ENCODE measurements at regions of chr3 and their contacts with region 1.

Region 1: DNA sequence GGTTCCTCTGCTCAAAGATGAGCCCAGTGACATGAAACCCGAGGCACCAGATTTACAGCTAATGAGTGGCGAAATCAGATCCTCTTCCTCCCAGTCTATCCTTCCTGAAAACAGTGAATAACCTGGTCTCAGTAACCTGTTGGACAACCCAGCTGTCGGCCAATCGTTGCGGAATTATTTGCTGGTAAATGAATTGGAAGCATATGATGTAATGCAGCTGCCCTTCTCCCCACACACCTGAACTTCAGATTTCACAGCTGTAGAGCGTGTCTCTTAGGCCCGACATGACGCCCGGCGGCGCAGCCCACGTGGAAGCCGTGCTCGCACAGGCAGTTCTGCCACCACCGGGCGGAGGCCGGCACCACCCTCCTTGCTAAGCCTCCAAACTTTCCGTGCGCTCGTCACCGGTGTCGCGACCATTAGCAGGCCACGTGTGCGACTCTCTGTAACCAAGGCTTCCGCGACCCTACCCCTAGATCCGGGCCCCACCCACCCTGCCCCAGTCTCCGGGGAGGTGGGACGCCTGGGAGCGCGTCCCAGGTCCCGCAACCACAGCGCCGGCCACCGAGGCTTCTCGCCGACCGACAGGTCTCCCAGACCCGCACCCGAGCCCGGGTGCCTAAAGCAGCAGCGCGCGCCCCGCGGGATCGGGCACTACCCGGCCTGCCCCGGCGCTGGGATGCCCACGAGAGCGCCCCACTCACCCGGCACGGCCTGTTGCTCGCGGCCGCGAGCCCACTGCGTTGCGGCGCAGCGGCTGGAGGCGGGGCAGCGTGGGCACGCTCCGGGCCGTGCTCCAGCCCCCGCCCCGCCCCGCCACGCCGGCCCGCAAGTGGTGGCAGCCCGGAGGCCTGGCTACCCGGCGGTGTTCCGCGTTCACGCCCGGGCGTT is at the start of gene RIOX2:
- H3K4me3 Mint-ChIP-seq: peak within 1 kb of the TSS; percentile 79
- H3K27ac Mint-ChIP-seq: peak within 1 kb of the TSS; percentile 67
- H3K4me1 Mint-ChIP-seq: peaks cover 57% of the 10 kb centered on the region
- H3K27me3 Mint-ChIP-seq: no peaks in the 10 kb centered on the region

Region 2: GRCh38 chr3:97821810-97822775 is 149.8 kb before region 1 on chr3 and contains the start of gene CRYBG3:
- intact Hi-C with region 1: loop called (anchors 5 kb)
- H3K4me3 Mint-ChIP-seq: peak within 1 kb of the TSS; percentile 99
- H3K27ac Mint-ChIP-seq: peak within 1 kb of the TSS; percentile 88
- H3K4me1 Mint-ChIP-seq: peaks cover 26% of the 10 kb centered on the region
- H3K27me3 Mint-ChIP-seq: peaks cover 26% of the 10 kb centered on the region

Region 3: DNA sequence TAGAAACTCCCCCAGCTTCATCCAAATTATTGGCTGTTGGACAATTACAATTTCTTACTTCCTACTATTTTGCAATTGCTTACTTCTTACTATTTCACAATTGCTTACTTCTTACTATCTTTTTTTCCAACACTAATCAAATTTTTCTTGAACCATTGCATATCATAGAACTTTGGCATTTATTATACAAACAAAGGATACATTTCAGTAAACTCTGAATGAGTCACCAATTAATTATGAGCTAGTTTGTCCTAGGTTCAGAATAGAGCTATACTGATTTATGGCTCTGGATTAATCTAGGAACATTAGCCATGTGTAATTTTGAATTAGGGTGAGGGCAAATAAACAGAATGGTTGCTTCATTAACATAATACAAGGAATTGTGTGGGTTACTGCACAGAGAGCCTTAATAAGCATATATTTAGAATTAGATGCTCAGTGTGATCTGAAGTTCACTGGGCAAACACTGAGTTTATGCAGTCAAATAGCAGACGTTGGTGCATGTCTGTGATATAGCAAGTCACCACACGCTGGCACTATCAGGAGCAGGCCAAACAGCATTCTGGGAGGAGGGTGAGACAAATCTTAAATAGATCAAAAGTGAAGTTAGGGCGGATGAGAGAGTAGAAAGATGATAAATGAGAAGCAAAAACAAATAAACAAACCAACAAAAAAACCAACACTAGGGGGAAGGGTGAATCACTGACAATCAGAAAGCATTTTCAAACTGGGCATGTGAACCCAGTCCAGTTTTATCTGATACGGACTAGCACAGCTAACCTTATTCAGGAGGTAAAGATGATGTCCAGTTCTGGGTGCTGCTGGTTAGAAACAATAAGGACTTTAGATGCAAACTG is 41.7 kb after region 1 on chr3:
- intact Hi-C with region 1: loop called (anchors 5 kb)
- H3K4me3 Mint-ChIP-seq: peak overlapping the region; percentile 2
- H3K27ac Mint-ChIP-seq: peak overlapping the region; percentile 78
- H3K4me1 Mint-ChIP-seq: peaks cover 26% of the 10 kb centered on the region
- H3K27me3 Mint-ChIP-seq: no peaks in the 10 kb centered on the region

Region 4: GRCh38 chr3:98086873-98087272 is 115.0 kb after region 1 on chr3 and contains the start of gene OR5AC2:
- intact Hi-C with region 1: no loop called
- H3K4me3 Mint-ChIP-seq: no peak within 1 kb of the TSS
- H3K27ac Mint-ChIP-seq: no peak within 1 kb of the TSS
- H3K4me1 Mint-ChIP-seq: no peaks in the 10 kb centered on the region
- H3K27me3 Mint-ChIP-seq: no peaks in the 10 kb centered on the region

Region 5: DNA sequence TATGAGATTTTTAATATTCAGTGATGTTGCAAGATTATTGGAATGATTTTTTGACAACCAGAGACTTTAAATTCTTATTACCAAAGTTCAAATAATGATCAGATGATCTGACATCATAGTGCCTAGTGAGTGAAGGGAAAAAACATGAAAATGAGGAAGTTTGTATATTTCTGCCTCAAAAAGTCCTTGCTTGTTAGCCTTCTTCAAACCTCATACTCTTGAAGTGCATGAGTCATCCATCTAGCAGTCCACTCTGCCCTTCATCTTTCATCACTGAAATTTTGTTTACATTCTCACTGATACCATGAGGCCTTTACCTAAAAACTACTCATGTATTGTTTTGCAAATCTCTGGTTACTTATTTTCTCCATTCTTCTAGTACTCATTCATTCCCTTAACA is 268.2 kb after region 1 on chr3:
- intact Hi-C with region 1: no loop called
- H3K4me3 Mint-ChIP-seq: no peak overlapping the region
- H3K27ac Mint-ChIP-seq: no peak overlapping the region
- H3K4me1 Mint-ChIP-seq: no peaks in the 10 kb centered on the region
- H3K27me3 Mint-ChIP-seq: no peaks in the 10 kb centered on the region